ENCODE measurements at regions of chr19 and their contacts with region 1.

Region 1: DNA sequence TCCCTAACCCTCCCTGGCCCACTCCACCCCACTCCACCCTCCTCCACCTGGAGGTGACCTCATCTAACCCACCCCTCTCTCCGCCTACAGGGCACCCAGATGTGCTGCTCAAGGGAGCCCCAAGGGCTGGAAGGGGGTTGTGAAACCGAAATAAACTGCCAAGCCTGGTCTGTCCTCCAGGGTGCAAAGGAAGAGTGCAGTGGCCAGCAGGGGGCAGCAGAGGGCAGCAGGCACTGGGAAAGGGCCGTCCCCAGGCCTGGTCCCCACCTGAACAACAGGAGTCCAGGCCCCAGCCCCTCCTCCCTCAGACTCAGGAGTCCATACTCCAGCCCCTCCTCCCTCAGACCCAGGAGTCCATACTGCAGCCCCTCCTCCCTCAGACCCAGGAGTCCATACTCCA is 8.4 kb upstream of the BCAM start:
- DNase-seq: peak; percentile 94
- H3K4me3 ChIP-seq: no peak overlapping the region
- H3K27ac ChIP-seq: peak overlapping the region in 2 of 8 donors; percentile 23 to 44
- H3K4me1 ChIP-seq: peaks cover 0 to 29% (median 24%) of the 10 kb centered on the region in 6 donors
- H3K27me3 ChIP-seq: no peaks in the 10 kb centered on the region
- CTCF ChIP-seq: peak; percentile 90 to 97 (median 92)
- POLR2A ChIP-seq: no peak

Region 2: GRCh38 chr19:44841231-44841630 is 40.8 kb after region 1 on chr19:
- intact Hi-C with region 1: loop called (anchors 5 kb)
- DNase-seq: no peak
- H3K4me3 ChIP-seq: no peak overlapping the region
- H3K27ac ChIP-seq: no peak overlapping the region
- H3K4me1 ChIP-seq: peaks cover 8 to 31% (median 17%) of the 10 kb centered on the region in 6 donors
- H3K27me3 ChIP-seq: peaks cover 0 to 12% (median under 1%) of the 10 kb centered on the region in 7 donors
- CTCF ChIP-seq: no peak
- POLR2A ChIP-seq: no peak